ENCODE measurements at regions of chr11 and their contacts with region 1.

Region 1: GRCh38 chr11:9265211-9266131 is at the start of gene DENND5A:
- DNase-seq: peak; percentile 91 to 94 (median 92)
- ATAC-seq: peak; percentile 91 to 96 (median 94)
- H3K4me3 ChIP-seq: peak within 1 kb of the TSS; percentile 85 to 99 (median 96)
- H3K27ac ChIP-seq: peak within 1 kb of the TSS; percentile 93 to 99 (median 98)
- H3K4me1 ChIP-seq: peaks cover 3 to 43% (median 31%) of the 10 kb centered on the region in 12 donors
- H3K27me3 ChIP-seq: no peaks in the 10 kb centered on the region
- CTCF ChIP-seq: peak in 1 of 12 donors; percentile 18
- POLR2A ChIP-seq: peak in 1 of 2 donors; percentile 80
- total RNA-seq, gene DENND5A: 104 to 175 (median 118) TPM

Region 2: DNA sequence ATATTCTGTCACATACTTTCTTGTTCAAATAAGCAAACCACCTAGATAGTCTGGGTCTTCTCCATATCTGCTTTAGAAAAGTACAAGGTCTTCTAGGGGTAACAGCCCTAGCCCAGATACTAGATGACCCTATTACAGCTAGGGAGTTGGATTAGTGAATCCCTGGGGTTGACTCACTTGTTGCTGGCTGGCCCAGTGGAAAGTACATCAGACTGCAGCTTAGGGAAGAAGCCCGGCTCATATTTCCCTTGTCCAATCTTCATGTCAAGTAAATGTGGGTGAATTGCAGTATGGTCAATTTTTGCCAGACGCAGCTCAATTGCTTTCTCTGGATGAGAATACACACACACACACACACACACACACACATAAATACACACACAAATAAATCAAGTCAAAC is 95.0 kb before region 1 on chr11:
- intact Hi-C with region 1: loop called in 1 of 10 experiments (anchors 10 kb)
- DNase-seq: no peak
- ATAC-seq: peak in 2 of 4 donors; percentile 56 to 74
- H3K4me3 ChIP-seq: no peak overlapping the region
- H3K27ac ChIP-seq: no peak overlapping the region
- H3K4me1 ChIP-seq: peaks cover 0 to 7% (median 0%) of the 10 kb centered on the region in 12 donors
- H3K27me3 ChIP-seq: no peaks in the 10 kb centered on the region
- CTCF ChIP-seq: no peak
- POLR2A ChIP-seq: no peak

Region 3: GRCh38 chr11:9208726-9209501 is 56.6 kb before region 1 on chr11:
- intact Hi-C with region 1: loop called in 7 of 10 experiments (anchors 5 to 10 kb)
- DNase-seq: no peak
- ATAC-seq: peak in 1 of 4 donors; percentile 10
- H3K4me3 ChIP-seq: no peak overlapping the region
- H3K27ac ChIP-seq: peak overlapping the region in 4 of 12 donors; percentile 5 to 27 (median 19)
- H3K4me1 ChIP-seq: peaks cover 0 to 73% (median 37%) of the 10 kb centered on the region in 12 donors
- H3K27me3 ChIP-seq: no peaks in the 10 kb centered on the region
- CTCF ChIP-seq: no peak
- POLR2A ChIP-seq: no peak

Region 4: DNA sequence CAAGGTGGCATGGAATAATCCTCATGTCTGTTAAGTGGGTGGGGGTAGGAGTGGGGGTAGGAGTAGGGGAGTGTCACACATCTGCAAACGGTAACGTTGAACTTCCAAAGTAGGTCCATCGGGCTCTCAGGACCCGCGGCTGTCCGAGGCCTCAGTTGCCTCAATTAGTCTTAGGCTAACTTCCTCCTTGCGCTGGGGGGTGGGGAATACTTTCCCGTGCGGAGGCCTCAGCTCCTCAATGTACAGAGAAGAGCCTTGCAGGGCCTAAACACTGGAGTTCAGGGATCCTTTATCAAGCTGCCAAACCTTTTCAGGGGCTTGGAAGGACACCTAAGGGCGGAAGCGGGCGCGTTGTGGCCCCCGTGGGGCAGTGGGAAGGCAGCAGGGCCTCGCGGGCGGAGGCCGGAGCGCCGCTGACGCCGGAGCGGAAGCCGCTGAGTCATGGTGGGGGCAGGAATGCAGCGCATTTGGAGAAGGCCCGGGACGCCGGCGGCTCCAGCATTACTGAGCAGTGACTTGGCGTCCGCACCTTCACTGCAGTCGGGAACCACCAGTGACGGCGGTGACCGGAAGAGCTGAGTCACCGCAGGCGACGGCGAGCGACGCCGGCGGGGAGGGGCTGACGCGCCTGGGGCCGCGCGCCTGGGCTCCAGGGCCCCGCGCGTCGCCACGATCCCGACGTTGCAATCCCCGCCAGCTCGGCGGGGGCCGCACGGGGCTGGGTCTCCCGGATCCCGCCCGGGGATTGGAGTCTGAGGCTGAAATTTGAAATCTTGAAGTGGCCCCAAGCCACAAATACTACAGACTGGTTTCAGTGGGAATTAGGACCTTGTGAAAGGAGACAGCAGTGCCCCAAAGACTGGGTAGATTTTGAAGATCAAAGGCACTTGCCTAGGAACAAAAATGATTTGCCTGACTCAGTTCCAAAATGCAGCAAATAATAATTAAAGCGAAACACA is 98.8 kb after region 1 on chr11:
- intact Hi-C with region 1: loop called in 1 of 10 experiments (anchors 5 kb)
- DNase-seq: peak; percentile 96 to 99 (median 97)
- ATAC-seq: peak; percentile 95 to 99 (median 99)
- H3K4me3 ChIP-seq: peak overlapping the region in 10 of 12 donors; percentile 39 to 65 (median 54)
- H3K27ac ChIP-seq: peak overlapping the region; percentile 91 to 100 (median 99)
- H3K4me1 ChIP-seq: peaks cover 0 to 25% (median 13%) of the 10 kb centered on the region in 12 donors
- H3K27me3 ChIP-seq: no peaks in the 10 kb centered on the region
- CTCF ChIP-seq: peak in 2 of 12 donors; percentile 6 to 7
- POLR2A ChIP-seq: peak in 1 of 2 donors; percentile 90

Region 5: GRCh38 chr11:9460322-9461067 is 195.0 kb after region 1 on chr11 and contains the start of gene ZNF143:
- intact Hi-C with region 1: loop called in 1 of 10 experiments (anchors 10 kb)
- DNase-seq: peak; percentile 100
- ATAC-seq: peak; percentile 96 to 99 (median 98)
- H3K4me3 ChIP-seq: peak within 1 kb of the TSS; percentile 80 to 99 (median 91)
- H3K27ac ChIP-seq: peak within 1 kb of the TSS; percentile 98 to 100 (median 100)
- H3K4me1 ChIP-seq: peaks cover 0 to 27% (median 20%) of the 10 kb centered on the region in 12 donors
- H3K27me3 ChIP-seq: no peaks in the 10 kb centered on the region
- CTCF ChIP-seq: peak in 1 of 12 donors; percentile 3
- POLR2A ChIP-seq: peak; percentile 76 to 91
- total RNA-seq, gene ZNF143: 16.8 to 32.3 (median 22.0) TPM